BJ (cell line): ENCODE measurements at regions of chr12 and their contacts with region 1.

Region 1: DNA sequence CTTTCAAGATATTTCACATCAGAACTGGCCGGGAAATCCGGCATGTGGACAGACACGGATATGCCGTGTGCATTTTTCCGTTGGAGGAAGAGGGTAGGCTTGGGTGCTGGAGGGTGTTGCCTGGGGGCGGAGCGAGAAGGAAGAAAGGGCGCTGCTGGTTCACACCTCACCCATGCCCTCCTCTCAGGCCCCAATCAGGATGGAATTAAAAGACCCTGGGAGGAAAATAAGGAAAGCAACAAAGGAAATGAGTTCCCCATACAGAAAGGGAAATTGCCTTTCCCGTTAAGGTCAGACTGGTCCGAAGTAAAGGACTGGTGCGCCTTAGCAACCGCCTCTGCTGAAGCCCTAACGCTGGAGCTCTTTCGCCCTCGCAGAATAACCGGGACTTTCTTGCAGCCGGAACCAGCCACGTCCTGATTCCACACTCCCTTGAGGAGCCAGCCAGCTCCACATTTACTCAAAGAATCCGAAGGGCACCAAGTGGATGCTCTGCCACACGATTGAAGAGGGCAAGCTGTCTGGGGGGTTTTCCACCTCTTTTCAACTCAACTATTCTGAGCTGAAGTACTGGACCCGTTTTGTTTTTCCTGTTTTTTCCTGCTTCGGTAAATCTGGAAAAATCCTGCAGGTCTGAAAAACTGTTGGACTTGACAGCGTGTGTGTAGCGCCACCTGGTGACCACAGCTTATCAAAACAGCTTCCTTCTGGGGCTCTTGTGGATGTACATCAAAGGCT is 37.7 kb upstream of the BCL2L14 start:
- DNase-seq: peak; percentile 27
- H3K4me3 ChIP-seq: peak overlapping the region; percentile 25
- H3K27me3 ChIP-seq: no peaks in the 10 kb centered on the region; the same call in 1 of the 2 replicates
- CTCF ChIP-seq: peak; percentile 85

Region 2: GRCh38 chr12:11553871-11554533 is 479.0 kb before region 1 on chr12:
- CTCF ChIA-PET with region 1: interaction called, 64 read pairs
- POLR2A ChIA-PET with region 1: no interaction called
- DNase-seq: no peak
- H3K4me3 ChIP-seq: no peak overlapping the region
- H3K27me3 ChIP-seq: peaks cover 13% of the 10 kb centered on the region
- CTCF ChIP-seq: peak; percentile 74

Region 3: GRCh38 chr12:11581179-11581755 is 451.8 kb before region 1 on chr12:
- CTCF ChIA-PET with region 1: interaction called, 156 read pairs
- POLR2A ChIA-PET with region 1: no interaction called
- DNase-seq: no peak
- H3K4me3 ChIP-seq: no peak overlapping the region
- H3K27me3 ChIP-seq: peaks cover 10% of the 10 kb centered on the region
- CTCF ChIP-seq: peak; percentile 27; the same call in 1 of the 2 replicates

Region 4: DNA sequence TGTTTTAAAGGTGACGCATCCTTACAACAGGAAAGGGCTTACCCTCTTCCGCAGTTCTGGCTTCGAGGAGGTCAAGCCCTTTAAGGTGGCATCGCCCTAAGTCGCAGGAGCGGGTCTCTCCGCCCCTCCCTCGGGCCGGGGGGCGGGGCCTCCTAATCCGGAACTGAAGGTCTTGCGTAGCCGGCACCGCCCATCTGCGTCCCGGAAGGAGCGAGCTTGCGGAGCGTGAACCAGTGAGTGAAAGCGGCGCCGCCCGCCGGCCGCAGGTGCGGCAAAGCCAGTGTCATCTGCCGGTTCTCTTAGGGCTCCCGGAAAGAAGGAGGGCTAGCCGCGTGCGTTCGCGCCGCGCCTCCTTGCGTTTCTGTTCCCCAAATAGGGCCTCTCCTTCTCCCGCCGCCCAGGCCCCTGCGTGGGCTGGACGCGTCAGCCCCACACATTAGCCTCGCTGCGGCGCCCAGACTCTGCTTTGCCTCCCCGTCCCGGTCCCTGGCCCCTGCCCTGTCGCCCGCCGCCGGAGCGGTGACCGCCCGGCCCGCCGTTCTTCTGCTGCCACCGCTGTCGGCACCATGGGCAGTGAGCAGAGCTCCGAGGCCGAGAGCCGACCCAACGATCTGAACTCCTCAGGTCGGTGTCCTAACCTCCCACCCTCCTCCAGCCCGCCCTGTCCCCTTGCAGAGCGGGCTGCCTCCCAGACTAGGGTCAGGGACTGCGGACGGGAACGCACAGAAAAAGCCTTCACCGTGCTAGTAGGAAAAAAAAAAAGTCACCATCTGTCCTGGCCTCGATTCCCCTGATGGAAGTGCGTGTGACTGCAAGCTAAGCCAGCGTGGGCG is 324.1 kb after region 1 on chr12 and contains the start of gene BORCS5:
- CTCF ChIA-PET with region 1: interaction called, 6 read pairs
- POLR2A ChIA-PET with region 1: interaction called, 14 read pairs
- DNase-seq: peak; percentile 63
- H3K4me3 ChIP-seq: peak within 1 kb of the TSS; percentile 67
- H3K27me3 ChIP-seq: no peaks in the 10 kb centered on the region
- CTCF ChIP-seq: peak; percentile 39
- polyA plus RNA-seq, gene BORCS5: 11.9 and 12.5 TPM in 2 replicates